ENCODE measurements at regions of chr5 and their contacts with region 1.

Region 1: GRCh38 chr5:78537821-78538220 is 110.8 kb downstream of the LHFPL2 start:
- DNase-seq: no peak
- H3K4me3 ChIP-seq: no peak overlapping the region
- H3K27ac ChIP-seq: no peak overlapping the region
- H3K4me1 ChIP-seq: peaks cover 17 to 60% (median 46%) of the 10 kb centered on the region in 4 donors
- H3K27me3 ChIP-seq: no peaks in the 10 kb centered on the region
- CTCF ChIP-seq: peak; percentile 63 to 71 (median 70)
- EP300 ChIP-seq: no peak
- POLR2A ChIP-seq: no peak

Region 2: GRCh38 chr5:78467752-78468357 is 70.0 kb before region 1 on chr5:
- intact Hi-C with region 1: loop called (anchors 5 kb)
- DNase-seq: no peak
- H3K4me3 ChIP-seq: no peak overlapping the region
- H3K27ac ChIP-seq: no peak overlapping the region
- H3K4me1 ChIP-seq: peaks cover 0 to 6% (median 3%) of the 10 kb centered on the region in 4 donors
- H3K27me3 ChIP-seq: no peaks in the 10 kb centered on the region
- CTCF ChIP-seq: peak; percentile 73 to 85 (median 83)
- EP300 ChIP-seq: no peak
- POLR2A ChIP-seq: no peak

Region 3: DNA sequence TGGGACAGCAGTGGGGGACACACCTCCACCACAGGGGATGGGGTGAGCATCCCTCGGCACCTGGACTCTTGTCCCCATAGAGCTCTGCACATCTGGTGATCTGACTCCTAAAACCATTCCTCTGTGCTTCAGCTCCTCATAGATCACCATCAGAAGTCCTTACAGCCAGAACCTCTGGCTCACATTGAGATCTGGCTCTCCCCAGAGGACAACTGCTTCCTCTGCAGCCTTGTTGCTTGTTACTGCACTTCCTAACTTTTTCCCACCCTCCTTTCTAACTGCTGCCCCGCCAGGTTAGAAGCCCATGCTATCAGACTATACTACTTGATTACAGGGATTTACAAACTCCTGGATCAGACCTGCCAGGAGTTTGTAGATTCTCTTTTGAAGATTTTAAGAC is 382.8 kb after region 1 on chr5:
- intact Hi-C with region 1: no loop called
- DNase-seq: no peak
- H3K4me3 ChIP-seq: no peak overlapping the region
- H3K27ac ChIP-seq: no peak overlapping the region
- H3K4me1 ChIP-seq: no peaks in the 10 kb centered on the region
- H3K27me3 ChIP-seq: no peaks in the 10 kb centered on the region
- CTCF ChIP-seq: peak in 1 of 3 experiments; percentile 24
- EP300 ChIP-seq: no peak
- POLR2A ChIP-seq: no peak

Region 4: DNA sequence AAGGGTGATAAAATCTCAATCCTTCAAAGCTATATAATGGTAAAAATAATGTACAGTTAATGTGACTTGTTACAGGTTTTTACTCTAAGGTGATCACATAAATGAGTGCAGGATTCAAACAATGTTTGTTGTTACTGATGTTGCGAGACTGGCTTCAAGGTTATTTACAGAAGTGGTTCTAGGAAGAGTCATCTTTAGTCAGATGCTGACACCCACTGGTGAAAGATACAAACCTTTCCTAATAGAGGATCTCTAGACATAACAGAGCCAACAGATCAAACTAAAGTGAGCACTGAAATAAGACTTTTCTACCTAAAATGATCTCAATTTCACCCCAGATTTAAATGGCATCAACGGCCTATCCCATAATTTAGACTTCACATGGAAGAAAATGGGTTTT is 427.1 kb after region 1 on chr5:
- intact Hi-C with region 1: loop called (anchors 5 kb)
- DNase-seq: no peak
- H3K4me3 ChIP-seq: no peak overlapping the region
- H3K27ac ChIP-seq: no peak overlapping the region
- H3K4me1 ChIP-seq: no peaks in the 10 kb centered on the region
- H3K27me3 ChIP-seq: no peaks in the 10 kb centered on the region
- CTCF ChIP-seq: peak; percentile 26 to 40 (median 34)
- EP300 ChIP-seq: no peak
- POLR2A ChIP-seq: no peak